HepG2 (cell line): ENCODE measurements at regions of chr16 and their contacts with region 1.

Region 1: GRCh38 chr16:50539822-50540710 is 8.1 kb upstream of the NKD1 start:
- DNase-seq: peak; percentile 52
- ATAC-seq: peak; percentile 12
- H3K4me3 ChIP-seq: 0 out of 6 replicates have a peak overlapping the region, but pooled peaks of 1 of the 3 experiments have one; percentile 17
- H3K27ac ChIP-seq: peak overlapping the region; percentile 88
- H3K4me1 ChIP-seq: peaks cover 72% of the 10 kb centered on the region
- H3K27me3 ChIP-seq: no peaks in the 10 kb centered on the region
- CTCF ChIP-seq: peak; percentile 72
- EP300 ChIP-seq: no peak
- POLR2A ChIP-seq: peak in 1 of 2 experiments; percentile 57; a peak in 1 of 4 replicates
- RAD21 ChIP-seq: peak; percentile 72

Region 2: GRCh38 chr16:50462793-50463507 is 77.1 kb before region 1 on chr16:
- CTCF ChIA-PET with region 1: no interaction called
- POLR2A ChIA-PET with region 1: interaction called, 17 read pairs
- in situ Hi-C with region 1: loop called (anchors 5 kb)
- intact Hi-C with region 1: no loop called
- DNase-seq: peak; percentile 72
- ATAC-seq: no peak
- H3K4me3 ChIP-seq: peak overlapping the region in 1 of 3 experiments; percentile 18; a peak in 1 of 6 replicates
- H3K27ac ChIP-seq: peak overlapping the region; percentile 41
- H3K4me1 ChIP-seq: peaks cover 78% of the 10 kb centered on the region
- H3K27me3 ChIP-seq: no peaks in the 10 kb centered on the region
- CTCF ChIP-seq: no peak
- EP300 ChIP-seq: no peak
- POLR2A ChIP-seq: no peak
- RAD21 ChIP-seq: no peak

Region 3: DNA sequence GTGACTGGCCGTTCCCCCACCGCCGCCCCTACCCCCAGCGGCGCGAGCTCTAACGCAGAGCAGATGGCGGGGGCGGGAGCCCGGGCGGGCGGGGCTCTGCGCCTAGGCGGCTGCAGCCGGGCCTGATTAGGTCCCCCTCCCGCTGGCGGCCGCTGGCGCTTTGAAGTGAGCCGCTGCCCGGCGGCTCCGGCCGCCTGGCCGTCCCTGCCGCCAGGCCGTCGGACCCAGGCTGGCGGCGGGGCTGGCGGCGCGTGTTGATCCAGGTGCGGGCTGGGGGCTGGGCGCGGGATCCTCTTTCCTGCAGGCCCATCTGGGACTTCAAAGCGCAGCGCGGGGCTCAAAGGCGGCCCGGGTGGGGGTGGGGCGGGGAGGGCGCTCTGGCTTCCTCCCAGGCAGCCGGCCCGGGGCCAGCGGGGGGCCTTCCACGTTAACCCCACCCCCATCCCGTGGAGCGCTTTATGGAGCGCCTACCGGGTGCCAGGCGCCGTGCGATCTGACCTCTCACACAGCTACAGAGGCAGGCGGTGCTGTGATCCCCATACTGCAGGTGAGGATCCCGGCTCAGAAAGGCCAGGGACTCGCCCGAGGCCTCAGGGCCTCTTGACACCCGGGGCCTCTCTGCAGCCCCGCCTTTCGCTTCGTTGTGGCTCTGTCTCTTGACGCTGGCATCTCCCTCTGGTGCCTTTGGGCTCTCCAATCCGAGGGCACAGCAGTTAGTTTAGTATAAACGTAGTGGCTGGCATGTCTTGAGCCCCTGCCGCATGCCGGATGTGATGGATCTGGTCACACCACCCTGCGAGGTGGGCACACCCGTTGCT is 71.9 kb before region 1 on chr16:
- CTCF ChIA-PET with region 1: no interaction called
- POLR2A ChIA-PET with region 1: interaction called, 17 read pairs
- in situ Hi-C with region 1: loop called (anchors 5 kb)
- intact Hi-C with region 1: no loop called
- DNase-seq: peak; percentile 97
- ATAC-seq: peak; percentile 89
- H3K4me3 ChIP-seq: peak overlapping the region in 2 of 3 experiments; percentile 11 to 24; a peak in 2 of 6 replicates
- H3K27ac ChIP-seq: peak overlapping the region; percentile 92
- H3K4me1 ChIP-seq: peaks cover 91% of the 10 kb centered on the region
- H3K27me3 ChIP-seq: no peaks in the 10 kb centered on the region
- CTCF ChIP-seq: peak; percentile 49
- EP300 ChIP-seq: peak; percentile 97 to 100
- POLR2A ChIP-seq: peak; percentile 63 to 67
- RAD21 ChIP-seq: peak; percentile 81

Region 4: DNA sequence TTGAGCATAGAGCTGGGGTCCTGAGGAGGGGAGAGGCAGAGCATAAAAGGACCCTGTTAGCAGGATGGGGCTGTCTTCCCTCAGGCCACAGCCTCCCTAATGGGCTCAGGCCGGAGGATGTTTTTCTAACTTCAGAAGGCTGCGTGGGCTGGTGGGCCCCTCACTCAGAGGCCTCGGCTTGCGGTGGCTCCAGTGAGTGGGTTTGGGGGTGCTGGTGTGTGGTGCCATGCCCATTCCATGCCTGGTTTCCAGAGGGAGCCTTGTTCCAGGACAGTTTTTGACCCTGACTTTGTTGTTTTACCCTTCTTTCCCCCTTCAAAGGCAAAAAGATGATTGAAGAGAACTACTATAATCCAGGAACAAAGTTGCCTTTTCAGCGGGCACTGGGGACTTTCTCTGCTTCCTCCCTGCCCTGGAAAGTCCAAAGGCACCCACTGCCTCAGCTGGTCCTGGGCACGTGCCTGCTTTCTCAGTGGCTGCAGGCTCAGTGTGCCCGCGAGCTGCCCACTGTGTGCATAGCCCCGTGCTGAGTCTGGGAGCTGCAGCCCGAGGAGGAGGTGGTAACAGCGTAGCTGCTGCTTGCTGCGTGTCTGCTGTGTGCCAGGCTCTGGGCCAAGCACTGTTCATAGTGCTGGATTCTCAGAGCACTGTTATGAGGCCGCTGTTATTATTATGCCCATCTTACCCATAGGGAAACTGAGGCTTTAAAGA is 19.9 kb after region 1 on chr16:
- CTCF ChIA-PET with region 1: no interaction called
- POLR2A ChIA-PET with region 1: no interaction called
- in situ Hi-C with region 1: no loop called
- intact Hi-C with region 1: no loop called
- DNase-seq: no peak
- ATAC-seq: peak; percentile 3; the same call in 1 of the 3 replicates
- H3K4me3 ChIP-seq: peak overlapping the region in 1 of 3 experiments; percentile 0; a peak in 1 of 6 replicates
- H3K27ac ChIP-seq: no peak overlapping the region
- H3K4me1 ChIP-seq: peaks cover 91% of the 10 kb centered on the region
- H3K27me3 ChIP-seq: no peaks in the 10 kb centered on the region
- CTCF ChIP-seq: no peak
- EP300 ChIP-seq: no peak
- POLR2A ChIP-seq: 0 out of 4 replicates have a peak, but pooled peaks of 1 of the 2 experiments have one; percentile 31
- RAD21 ChIP-seq: no peak

Region 5: GRCh38 chr16:50573947-50574744 is 34.1 kb after region 1 on chr16:
- CTCF ChIA-PET with region 1: no interaction called
- POLR2A ChIA-PET with region 1: no interaction called
- in situ Hi-C with region 1: no loop called
- intact Hi-C with region 1: no loop called
- DNase-seq: no peak
- ATAC-seq: no peak
- H3K4me3 ChIP-seq: no peak overlapping the region
- H3K27ac ChIP-seq: no peak overlapping the region
- H3K4me1 ChIP-seq: peaks cover 85% of the 10 kb centered on the region
- H3K27me3 ChIP-seq: no peaks in the 10 kb centered on the region
- CTCF ChIP-seq: no peak
- EP300 ChIP-seq: no peak
- POLR2A ChIP-seq: peak in 1 of 2 experiments; percentile 16; a peak in 1 of 4 replicates
- RAD21 ChIP-seq: no peak